Heart right ventricle (tissue), 16 donors: ENCODE measurements at regions of chr22 and their contacts with region 1.

Region 1: GRCh38 chr22:27252282-27253049 is 549.1 kb downstream of the MN1 start:
- DNase-seq: no peak
- ATAC-seq: peak in 3 of 8 donors; percentile 17 to 60 (median 20)
- H3K4me3 ChIP-seq: no peak overlapping the region
- H3K27ac ChIP-seq: peak overlapping the region in 3 of 10 donors; percentile 0 to 20 (median 12)
- H3K4me1 ChIP-seq: peaks cover 0 to 17% (median 8%) of the 10 kb centered on the region in 9 donors
- H3K27me3 ChIP-seq: peaks cover 0 to 11% (median 0%) of the 10 kb centered on the region in 7 donors
- CTCF ChIP-seq: no peak

Region 2: DNA sequence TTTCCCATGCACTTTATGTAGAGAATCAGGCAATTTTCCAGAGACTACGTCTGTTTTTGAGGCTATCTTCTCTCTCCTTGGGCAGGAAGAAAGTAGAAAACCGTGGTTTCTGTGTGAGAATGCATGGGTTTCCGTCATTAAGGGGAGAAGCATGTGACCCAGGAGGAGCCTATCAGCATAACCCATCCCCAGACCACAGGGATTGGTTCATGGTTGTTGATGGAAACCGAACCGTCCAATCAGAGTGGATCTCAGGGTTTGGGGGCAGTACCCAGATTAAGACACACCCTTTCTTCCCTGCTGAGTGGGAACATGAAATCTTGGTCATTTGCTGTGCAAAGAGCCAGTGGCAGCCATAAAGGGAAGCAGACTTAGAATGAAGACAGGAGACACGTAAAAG is 31.2 kb after region 1 on chr22:
- intact Hi-C with region 1: loop called in 1 of 10 experiments (anchors 1 kb)
- DNase-seq: no peak
- ATAC-seq: no peak
- H3K4me3 ChIP-seq: no peak overlapping the region
- H3K27ac ChIP-seq: no peak overlapping the region
- H3K4me1 ChIP-seq: no peaks in the 10 kb centered on the region
- H3K27me3 ChIP-seq: peaks cover 0 to 33% (median 20%) of the 10 kb centered on the region in 7 donors
- CTCF ChIP-seq: no peak